T-cell (primary cell): ENCODE measurements at regions of chr14 and their contacts with region 1.

Region 1: DNA sequence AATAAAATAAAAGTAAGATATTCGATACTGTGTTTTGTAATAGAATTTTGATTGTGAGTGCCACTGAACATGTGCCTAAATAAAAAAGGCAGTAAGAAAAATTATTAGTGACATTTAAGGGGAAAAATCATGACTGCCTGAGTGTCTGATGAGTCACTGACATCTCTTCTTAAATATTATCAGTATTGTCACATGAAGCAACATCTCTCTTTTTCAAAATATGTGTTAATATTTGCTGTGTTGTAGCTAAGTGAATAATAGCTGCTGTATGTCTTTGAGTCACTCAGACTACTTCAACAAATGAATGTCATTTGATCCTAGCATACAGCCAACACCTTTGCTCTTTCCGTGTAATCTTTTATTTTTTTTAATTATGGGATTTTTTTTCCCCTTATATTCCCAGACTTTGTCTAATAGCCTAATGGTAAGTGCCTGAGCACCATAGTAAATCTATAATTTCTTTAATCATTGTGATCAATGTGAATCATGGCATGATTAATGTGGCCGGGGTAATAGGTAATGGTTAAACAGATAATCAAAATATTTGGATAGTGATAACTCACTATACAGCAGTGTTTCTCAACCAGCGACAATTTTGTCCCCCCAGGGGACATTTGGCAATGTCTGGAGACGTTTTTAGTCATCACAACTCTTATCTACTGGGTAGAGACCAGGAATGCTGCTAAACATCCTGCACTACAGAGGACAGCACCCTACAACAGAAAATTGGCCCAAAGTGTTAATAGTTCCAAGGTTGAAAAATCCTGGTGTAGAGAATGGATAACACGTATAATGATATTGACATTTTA is 11.7 kb upstream of the OTX2 start:
- DNase-seq: no peak
- ATAC-seq: no peak
- H3K4me3 ChIP-seq: no peak overlapping the region
- H3K4me3 Mint-ChIP-seq: no peak overlapping the region
- H3K27ac ChIP-seq: no peak overlapping the region
- H3K27ac Mint-ChIP-seq: no peak overlapping the region
- H3K4me1 ChIP-seq: no peaks in the 10 kb centered on the region
- H3K4me1 Mint-ChIP-seq: no peaks in the 10 kb centered on the region
- H3K27me3 ChIP-seq: peaks cover 11 to 29% of the 10 kb centered on the region in 2 experiments
- H3K27me3 Mint-ChIP-seq: peaks cover 30 to 42% of the 10 kb centered on the region in 2 donors

Region 2: DNA sequence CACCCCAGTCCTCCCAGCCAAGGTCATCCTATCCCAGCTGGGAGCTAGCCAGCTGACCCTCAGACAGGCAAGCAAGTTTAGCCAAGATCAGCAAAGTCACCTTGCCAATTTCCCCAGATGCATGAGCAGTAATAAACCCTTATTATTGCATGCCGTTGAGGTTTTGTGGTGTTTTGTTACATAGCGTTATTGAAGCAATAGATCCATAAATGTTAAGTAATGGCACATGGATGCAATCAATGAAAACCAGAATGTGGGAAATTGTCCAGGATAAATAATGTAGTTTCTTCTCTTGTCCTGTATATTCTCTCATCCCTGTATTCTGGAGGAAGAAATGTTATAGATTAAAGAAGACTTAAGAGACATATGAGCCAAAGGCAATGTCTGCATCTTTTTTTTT is 260.4 kb before region 1 on chr14:
- CTCF ChIA-PET with region 1: no interaction called
- POLR2A ChIA-PET with region 1: no interaction called
- DNase-seq: no peak
- ATAC-seq: no peak
- H3K4me3 ChIP-seq: no peak overlapping the region
- H3K4me3 Mint-ChIP-seq: no peak overlapping the region
- H3K27ac ChIP-seq: no peak overlapping the region
- H3K27ac Mint-ChIP-seq: no peak overlapping the region
- H3K4me1 ChIP-seq: no peaks in the 10 kb centered on the region
- H3K4me1 Mint-ChIP-seq: no peaks in the 10 kb centered on the region
- H3K27me3 ChIP-seq: peaks cover 0 to 18% of the 10 kb centered on the region in 2 experiments
- H3K27me3 Mint-ChIP-seq: peaks cover 28 to 33% of the 10 kb centered on the region in 2 donors

Region 3: GRCh38 chr14:57918791-57919190 is 1096.8 kb after region 1 on chr14:
- CTCF ChIA-PET with region 1: interaction called in 1 of 2 experiments, 14 read pairs
- POLR2A ChIA-PET with region 1: no interaction called
- DNase-seq: no peak
- ATAC-seq: no peak
- H3K4me3 ChIP-seq: no peak overlapping the region
- H3K4me3 Mint-ChIP-seq: no peak overlapping the region
- H3K27ac ChIP-seq: no peak overlapping the region
- H3K27ac Mint-ChIP-seq: no peak overlapping the region
- H3K4me1 ChIP-seq: no peaks in the 10 kb centered on the region
- H3K4me1 Mint-ChIP-seq: no peaks in the 10 kb centered on the region
- H3K27me3 ChIP-seq: no peaks in the 10 kb centered on the region
- H3K27me3 Mint-ChIP-seq: peaks cover 3 to 4% of the 10 kb centered on the region in 2 donors